Colonic mucosa (tissue), 4 donors: ENCODE measurements at regions of chr19 and their contacts with region 1.

Region 1: GRCh38 chr19:48290771-48291488 is 21.0 kb downstream of the ZNF114 start:
- DNase-seq: peak; percentile 78
- H3K4me3 ChIP-seq: peak overlapping the region; percentile 41
- H3K27ac ChIP-seq: no peak overlapping the region
- H3K4me1 ChIP-seq: peaks cover 4% of the 10 kb centered on the region
- H3K27me3 ChIP-seq: no peaks in the 10 kb centered on the region
- CTCF ChIP-seq: peak; percentile 95

Region 2: DNA sequence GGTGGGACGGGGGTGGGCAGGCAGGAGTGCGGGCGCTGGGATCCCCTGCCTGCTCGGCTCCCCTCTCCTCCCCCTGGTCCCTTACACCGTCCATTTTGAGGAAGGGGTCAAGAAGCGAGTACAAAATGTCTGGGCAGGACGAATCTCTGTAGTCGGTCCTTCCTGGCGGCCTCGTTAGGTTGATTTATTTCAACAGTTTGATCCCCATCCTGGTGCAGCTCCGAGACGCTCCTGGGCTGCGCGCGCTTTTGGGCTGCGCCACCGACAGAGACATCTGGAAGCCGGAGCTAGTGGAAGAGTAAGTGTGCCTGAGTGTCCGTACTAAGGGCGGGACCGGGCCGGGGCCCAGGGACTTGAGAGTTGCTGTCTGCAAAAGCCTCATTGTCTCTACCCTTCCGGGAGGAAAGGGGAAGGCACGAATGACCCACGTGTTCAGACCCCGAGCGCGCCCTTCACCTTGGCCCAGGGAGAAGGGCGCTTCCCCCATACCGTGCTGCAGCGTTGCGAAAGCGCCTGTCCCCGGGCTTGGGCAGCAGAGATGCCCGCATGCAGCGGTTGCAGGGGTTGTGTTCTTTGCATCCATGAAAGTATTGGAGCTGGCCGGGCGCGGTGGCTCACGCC is 19.3 kb before region 1 on chr19:
- intact Hi-C with region 1: loop called (anchors 1 kb)
- DNase-seq: peak; percentile 32
- H3K4me3 ChIP-seq: peak overlapping the region; percentile 36
- H3K27ac ChIP-seq: no peak overlapping the region
- H3K4me1 ChIP-seq: no peaks in the 10 kb centered on the region
- H3K27me3 ChIP-seq: no peaks in the 10 kb centered on the region
- CTCF ChIP-seq: no peak

Region 3: GRCh38 chr19:48433337-48433736 is 142.4 kb after region 1 on chr19:
- intact Hi-C with region 1: no loop called
- DNase-seq: no peak
- H3K4me3 ChIP-seq: no peak overlapping the region
- H3K27ac ChIP-seq: no peak overlapping the region
- H3K4me1 ChIP-seq: no peaks in the 10 kb centered on the region
- H3K27me3 ChIP-seq: no peaks in the 10 kb centered on the region
- CTCF ChIP-seq: no peak